GM12878 (cell line): ENCODE measurements at regions of chr1 and their contacts with region 1.

Region 1: DNA sequence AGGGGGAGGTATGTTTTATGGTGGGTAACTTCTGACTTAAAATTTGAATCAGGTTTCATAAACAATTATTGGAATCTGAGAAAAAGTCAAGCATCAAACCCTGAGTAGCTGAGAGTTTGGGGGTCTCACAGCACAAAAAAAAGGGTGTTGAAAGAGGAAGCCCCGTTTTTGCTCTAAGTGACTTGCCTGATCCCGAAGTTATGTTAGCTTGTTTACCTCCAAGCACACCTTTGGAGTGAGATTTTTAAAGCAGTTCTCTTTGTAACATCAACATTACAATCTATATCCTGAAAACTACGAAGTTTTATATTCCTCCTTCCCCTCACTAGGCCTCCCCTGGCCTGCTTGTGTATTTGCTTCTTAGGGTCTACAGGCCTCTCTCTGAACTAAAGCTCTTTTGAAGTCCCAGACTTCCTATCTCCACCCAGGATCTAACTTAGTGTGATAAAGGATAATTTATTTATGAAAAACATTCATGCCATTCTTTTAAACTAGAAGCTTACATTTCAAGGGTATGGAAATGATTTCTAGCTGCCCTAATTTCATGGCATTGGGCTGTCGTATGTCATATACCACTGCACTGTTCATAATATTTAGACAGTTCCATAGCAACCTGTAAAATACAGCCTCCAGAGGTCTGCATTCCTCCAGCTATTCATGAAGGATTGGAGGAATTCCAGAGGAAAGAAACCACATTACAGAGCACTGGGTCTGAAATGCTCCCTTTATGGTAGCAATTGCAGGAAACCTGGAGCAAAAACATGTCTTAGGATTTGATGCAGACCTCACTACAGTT is 36.1 kb upstream of the RGS1 start:
- DNase-seq: no peak
- ATAC-seq: peak; percentile 40
- H3K4me3 ChIP-seq: no peak overlapping the region
- H3K27ac ChIP-seq: peak overlapping the region; percentile 81
- H3K4me1 ChIP-seq: peaks cover 24% of the 10 kb centered on the region
- H3K27me3 ChIP-seq: no peaks in the 10 kb centered on the region
- CTCF ChIP-seq: no peak
- EP300 ChIP-seq: no peak
- POLR2A ChIP-seq: no peak
- RAD21 ChIP-seq: no peak

Region 2: GRCh38 chr1:192516776-192517297 is 22.7 kb before region 1 on chr1:
- CTCF ChIA-PET with region 1: interaction called, 78 read pairs
- POLR2A ChIA-PET with region 1: interaction called, 170 read pairs
- RAD21 ChIA-PET with region 1: interaction called, 288 read pairs
- SMC1A ChIA-PET with region 1: interaction called, 268 read pairs
- in situ Hi-C with region 1: no loop called
- intact Hi-C with region 1: no loop called
- DNase-seq: peak; percentile 99
- ATAC-seq: peak; percentile 87
- H3K4me3 ChIP-seq: 0 out of 2 replicates have a peak overlapping the region, but pooled peaks have one; percentile 34
- H3K27ac ChIP-seq: peak overlapping the region; percentile 72
- H3K4me1 ChIP-seq: peaks cover 22% of the 10 kb centered on the region; the same call in 1 of the 2 replicates
- H3K27me3 ChIP-seq: no peaks in the 10 kb centered on the region
- CTCF ChIP-seq: no peak
- EP300 ChIP-seq: peak; percentile 99
- POLR2A ChIP-seq: no peak
- RAD21 ChIP-seq: peak; percentile 14; the same call in 1 of the 2 replicates

Region 3: GRCh38 chr1:192524223-192524622 is 15.3 kb before region 1 on chr1:
- CTCF ChIA-PET with region 1: interaction called, 78 read pairs
- POLR2A ChIA-PET with region 1: interaction called, 170 read pairs
- RAD21 ChIA-PET with region 1: interaction called, 288 read pairs
- SMC1A ChIA-PET with region 1: interaction called, 268 read pairs
- in situ Hi-C with region 1: no loop called
- intact Hi-C with region 1: no loop called
- DNase-seq: no peak
- ATAC-seq: no peak
- H3K4me3 ChIP-seq: no peak overlapping the region
- H3K27ac ChIP-seq: no peak overlapping the region
- H3K4me1 ChIP-seq: peaks cover 9% of the 10 kb centered on the region; the same call in 1 of the 2 replicates
- H3K27me3 ChIP-seq: no peaks in the 10 kb centered on the region
- CTCF ChIP-seq: no peak
- EP300 ChIP-seq: no peak
- POLR2A ChIP-seq: no peak
- RAD21 ChIP-seq: no peak

Region 4: GRCh38 chr1:192559115-192560006 is 19.9 kb after region 1 on chr1:
- CTCF ChIA-PET with region 1: interaction called, 5 read pairs
- POLR2A ChIA-PET with region 1: interaction called, 82 read pairs
- RAD21 ChIA-PET with region 1: interaction called, 91 read pairs
- SMC1A ChIA-PET with region 1: interaction called, 121 read pairs
- in situ Hi-C with region 1: no loop called
- intact Hi-C with region 1: no loop called
- DNase-seq: no peak
- ATAC-seq: peak; percentile 54
- H3K4me3 ChIP-seq: peak overlapping the region; percentile 23; the same call in 1 of the 2 replicates
- H3K27ac ChIP-seq: peak overlapping the region; percentile 79
- H3K4me1 ChIP-seq: peaks cover 3% of the 10 kb centered on the region; the same call in 1 of the 2 replicates
- H3K27me3 ChIP-seq: no peaks in the 10 kb centered on the region
- CTCF ChIP-seq: no peak
- EP300 ChIP-seq: peak; percentile 93 to 99
- POLR2A ChIP-seq: no peak
- RAD21 ChIP-seq: peak; percentile 14; the same call in 1 of the 2 replicates

Region 5: GRCh38 chr1:192566657-192567056 is 27.2 kb after region 1 on chr1:
- CTCF ChIA-PET with region 1: interaction called, 3 read pairs
- POLR2A ChIA-PET with region 1: interaction called, 12 read pairs
- RAD21 ChIA-PET with region 1: interaction called, 8 read pairs
- SMC1A ChIA-PET with region 1: interaction called, 41 read pairs
- in situ Hi-C with region 1: no loop called
- intact Hi-C with region 1: no loop called
- DNase-seq: no peak
- ATAC-seq: peak; percentile 56
- H3K4me3 ChIP-seq: no peak overlapping the region
- H3K27ac ChIP-seq: no peak overlapping the region
- H3K4me1 ChIP-seq: no peaks in the 10 kb centered on the region
- H3K27me3 ChIP-seq: no peaks in the 10 kb centered on the region
- CTCF ChIP-seq: no peak
- EP300 ChIP-seq: no peak
- POLR2A ChIP-seq: no peak
- RAD21 ChIP-seq: no peak

Region 6: GRCh38 chr1:192678099-192678498 is 138.6 kb after region 1 on chr1:
- CTCF ChIA-PET with region 1: no interaction called
- POLR2A ChIA-PET with region 1: no interaction called
- RAD21 ChIA-PET with region 1: no interaction called
- SMC1A ChIA-PET with region 1: no interaction called
- in situ Hi-C with region 1: no loop called
- intact Hi-C with region 1: no loop called
- DNase-seq: no peak
- ATAC-seq: no peak
- H3K4me3 ChIP-seq: no peak overlapping the region
- H3K27ac ChIP-seq: no peak overlapping the region
- H3K4me1 ChIP-seq: no peaks in the 10 kb centered on the region
- H3K27me3 ChIP-seq: no peaks in the 10 kb centered on the region
- CTCF ChIP-seq: no peak
- EP300 ChIP-seq: no peak
- POLR2A ChIP-seq: no peak
- RAD21 ChIP-seq: no peak